GM12878 (cell line): ENCODE measurements at regions of chr3 and their contacts with region 1.

Region 1: GRCh38 chr3:45906681-45907407 is 20.5 kb downstream of the CCR9 start:
- DNase-seq: no peak
- ATAC-seq: no peak
- H3K4me3 ChIP-seq: no peak overlapping the region
- H3K27ac ChIP-seq: no peak overlapping the region
- H3K4me1 ChIP-seq: peaks cover 17% of the 10 kb centered on the region
- H3K27me3 ChIP-seq: 0 out of 4 replicates have a peak, but pooled peaks cover 0 to 2% of the 10 kb centered on the region in 2 experiments
- CTCF ChIP-seq: peak; percentile 35 to 46 (median 39); a peak in 4 of 6 replicates
- EP300 ChIP-seq: no peak
- POLR2A ChIP-seq: no peak
- RAD21 ChIP-seq: peak; percentile 71

Region 2: DNA sequence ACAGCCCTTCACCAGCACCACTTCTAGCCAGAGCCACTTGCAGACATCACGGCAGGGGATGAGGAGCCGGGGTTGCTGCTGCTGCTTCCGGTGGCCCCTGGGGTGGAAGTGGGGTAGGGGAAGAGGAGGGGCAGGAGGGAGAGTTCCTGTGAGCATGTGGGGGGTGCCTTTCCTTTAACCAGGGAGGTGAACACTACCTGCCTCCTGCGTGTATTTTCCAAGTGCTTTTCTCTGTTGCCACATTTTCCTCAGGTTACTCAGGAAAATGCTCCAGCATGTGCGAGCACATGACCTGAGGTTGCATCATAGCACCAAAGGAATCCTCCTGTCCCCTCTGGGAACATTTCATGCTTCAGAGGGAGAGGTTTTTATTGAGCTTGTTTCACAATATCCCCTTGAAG is 229.8 kb before region 1 on chr3:
- CTCF ChIA-PET with region 1: no interaction called
- POLR2A ChIA-PET with region 1: no interaction called
- RAD21 ChIA-PET with region 1: no interaction called
- SMC1A ChIA-PET with region 1: no interaction called
- in situ Hi-C with region 1: no loop called
- intact Hi-C with region 1: no loop called
- DNase-seq: no peak
- ATAC-seq: no peak
- H3K4me3 ChIP-seq: no peak overlapping the region
- H3K27ac ChIP-seq: no peak overlapping the region
- H3K4me1 ChIP-seq: no peaks in the 10 kb centered on the region
- H3K27me3 ChIP-seq: no peaks in the 10 kb centered on the region
- CTCF ChIP-seq: no peak
- EP300 ChIP-seq: no peak
- POLR2A ChIP-seq: peak; percentile 24; the same call in 1 of the 2 replicates
- RAD21 ChIP-seq: no peak

Region 3: GRCh38 chr3:45760878-45761711 is 145.7 kb before region 1 on chr3:
- CTCF ChIA-PET with region 1: interaction called, 6 read pairs
- POLR2A ChIA-PET with region 1: no interaction called
- RAD21 ChIA-PET with region 1: interaction called, 14 read pairs
- SMC1A ChIA-PET with region 1: interaction called, 7 read pairs
- in situ Hi-C with region 1: no loop called
- intact Hi-C with region 1: no loop called
- DNase-seq: peak; percentile 5
- ATAC-seq: peak; percentile 98
- H3K4me3 ChIP-seq: no peak overlapping the region
- H3K27ac ChIP-seq: no peak overlapping the region
- H3K4me1 ChIP-seq: no peaks in the 10 kb centered on the region
- H3K27me3 ChIP-seq: 0 out of 4 replicates have a peak, but pooled peaks cover 0 to 2% of the 10 kb centered on the region in 2 experiments
- CTCF ChIP-seq: peak; percentile 80 to 89 (median 83)
- EP300 ChIP-seq: no peak
- POLR2A ChIP-seq: no peak
- RAD21 ChIP-seq: peak; percentile 87

Region 4: DNA sequence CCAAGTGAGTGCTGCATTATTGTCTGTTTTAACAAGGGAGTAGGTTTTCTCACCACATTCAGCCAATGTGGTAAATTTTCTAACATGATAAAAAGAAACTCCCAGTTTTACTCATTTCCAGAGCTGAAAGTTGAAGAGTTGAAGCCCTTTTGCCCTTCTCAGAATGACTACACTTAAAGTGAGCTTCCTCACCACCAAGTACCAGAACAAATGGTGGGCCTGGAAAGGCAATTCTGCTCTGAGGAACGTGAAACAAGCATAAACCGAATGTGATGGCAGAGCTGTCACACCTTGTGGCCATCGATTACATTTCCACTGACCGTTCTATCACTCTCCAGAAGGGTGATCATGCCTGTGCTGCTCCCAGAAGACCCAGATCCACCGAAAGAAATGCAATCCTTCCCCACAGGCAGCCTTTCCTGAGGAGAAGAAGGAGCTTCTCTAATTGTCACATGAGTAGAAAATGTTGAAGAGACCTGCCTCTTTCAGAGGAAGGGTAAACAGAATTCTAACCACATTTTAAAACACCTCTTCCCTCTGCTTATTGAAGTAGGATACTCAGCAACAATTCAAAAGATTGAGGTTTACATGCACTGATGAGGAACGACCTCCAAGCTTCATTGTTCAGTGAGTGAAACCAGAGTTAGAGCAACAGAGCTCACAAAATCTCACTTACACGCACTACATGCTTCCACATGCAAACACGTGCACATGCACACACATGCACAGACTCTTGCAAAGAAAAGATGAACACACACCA is 41.9 kb before region 1 on chr3:
- CTCF ChIA-PET with region 1: interaction called, 67 read pairs
- POLR2A ChIA-PET with region 1: interaction called, 41 read pairs
- RAD21 ChIA-PET with region 1: interaction called, 169 read pairs
- SMC1A ChIA-PET with region 1: interaction called, 166 read pairs
- in situ Hi-C with region 1: loop called (anchors 5 kb)
- intact Hi-C with region 1: loop called (anchors 1 kb)
- DNase-seq: peak; percentile 71
- ATAC-seq: peak; percentile 84
- H3K4me3 ChIP-seq: no peak overlapping the region
- H3K27ac ChIP-seq: peak overlapping the region; percentile 90
- H3K4me1 ChIP-seq: peaks cover 71% of the 10 kb centered on the region
- H3K27me3 ChIP-seq: no peaks in the 10 kb centered on the region; a peak in 2 of 4 replicates
- CTCF ChIP-seq: no peak
- EP300 ChIP-seq: peak; percentile 99
- POLR2A ChIP-seq: no peak; the same call in 1 of the 2 replicates
- RAD21 ChIP-seq: peak; percentile 35

Region 5: GRCh38 chr3:45881078-45882022 is 25.5 kb before region 1 on chr3:
- CTCF ChIA-PET with region 1: interaction called, 22 read pairs
- POLR2A ChIA-PET with region 1: interaction called, 29 read pairs
- RAD21 ChIA-PET with region 1: interaction called, 229 read pairs
- SMC1A ChIA-PET with region 1: interaction called, 199 read pairs
- in situ Hi-C with region 1: no loop called
- intact Hi-C with region 1: no loop called
- DNase-seq: no peak
- ATAC-seq: peak; percentile 70
- H3K4me3 ChIP-seq: no peak overlapping the region
- H3K27ac ChIP-seq: 0 out of 2 replicates have a peak overlapping the region, but pooled peaks have one; percentile 28
- H3K4me1 ChIP-seq: peaks cover 42% of the 10 kb centered on the region
- H3K27me3 ChIP-seq: peaks cover 0 to 3% of the 10 kb centered on the region in 2 experiments; a peak in 1 of 4 replicates
- CTCF ChIP-seq: no peak
- EP300 ChIP-seq: peak; percentile 78 to 82; a peak in 3 of 4 replicates
- POLR2A ChIP-seq: peak; percentile 56; the same call in 1 of the 2 replicates
- RAD21 ChIP-seq: 0 out of 2 replicates have a peak, but pooled peaks have one; percentile 4

Region 6: DNA sequence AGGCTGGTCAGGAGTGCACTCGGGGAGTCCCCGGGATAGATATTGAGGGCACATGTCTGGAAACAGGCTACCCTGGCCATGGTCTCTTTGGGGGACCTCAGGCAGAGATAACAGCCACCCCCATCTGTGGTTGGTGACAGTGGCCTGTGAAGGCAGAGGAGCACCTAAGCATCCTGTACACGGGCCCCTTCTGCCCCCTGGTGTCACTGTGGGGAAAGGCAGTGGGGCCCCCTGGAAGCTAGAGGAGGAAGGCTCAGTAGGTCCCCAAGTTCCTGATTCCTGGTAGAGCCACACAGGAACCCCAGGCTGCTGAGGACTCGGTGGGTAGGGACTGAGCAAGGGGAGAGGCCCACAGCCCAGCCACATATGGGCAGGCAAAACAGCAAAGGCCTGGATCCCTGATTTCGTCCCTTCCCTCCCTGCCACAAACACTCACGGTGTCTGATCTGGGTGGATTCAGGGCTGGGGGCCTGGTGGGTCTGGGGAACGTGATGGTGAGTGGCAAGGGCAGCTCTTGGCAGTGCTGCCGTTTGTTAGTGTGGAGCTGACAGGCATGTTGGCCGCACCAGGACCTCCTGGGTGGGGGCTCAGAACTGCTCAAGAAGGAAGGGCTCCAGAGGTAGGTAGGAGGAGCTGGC is 22.3 kb after region 1 on chr3:
- CTCF ChIA-PET with region 1: interaction called, 50 read pairs
- POLR2A ChIA-PET with region 1: no interaction called
- RAD21 ChIA-PET with region 1: interaction called, 36 read pairs
- SMC1A ChIA-PET with region 1: interaction called, 42 read pairs
- in situ Hi-C with region 1: no loop called
- intact Hi-C with region 1: no loop called
- DNase-seq: no peak
- ATAC-seq: peak; percentile 100
- H3K4me3 ChIP-seq: no peak overlapping the region
- H3K27ac ChIP-seq: no peak overlapping the region
- H3K4me1 ChIP-seq: no peaks in the 10 kb centered on the region; the same call in 1 of the 2 replicates
- H3K27me3 ChIP-seq: no peaks in the 10 kb centered on the region
- CTCF ChIP-seq: peak; percentile 94 to 98 (median 97); a peak in 5 of 6 replicates
- EP300 ChIP-seq: no peak
- POLR2A ChIP-seq: no peak
- RAD21 ChIP-seq: peak; percentile 99